ENCODE measurements at regions of chr5 and their contacts with region 1.

Region 1: GRCh38 chr5:134586866-134587524 is 45.6 kb downstream of the SAR1B start:
- DNase-seq: peak; percentile 88
- ATAC-seq: peak; percentile 93 to 95
- H3K4me3 ChIP-seq: peak overlapping the region; percentile 7
- H3K27ac ChIP-seq: no peak overlapping the region
- H3K4me1 ChIP-seq: peaks cover 6% of the 10 kb centered on the region
- H3K27me3 ChIP-seq: no peaks in the 10 kb centered on the region
- CTCF ChIP-seq: peak; percentile 93

Region 2: GRCh38 chr5:134304311-134304710 is 282.7 kb before region 1 on chr5:
- intact Hi-C with region 1: loop called (anchors 5 kb)
- DNase-seq: no peak
- ATAC-seq: no peak
- H3K4me3 ChIP-seq: no peak overlapping the region
- H3K27ac ChIP-seq: no peak overlapping the region
- H3K4me1 ChIP-seq: peaks cover 4% of the 10 kb centered on the region
- H3K27me3 ChIP-seq: no peaks in the 10 kb centered on the region
- CTCF ChIP-seq: no peak